ENCODE measurements at regions of chr2 and their contacts with region 1.

Region 1: GRCh38 chr2:189179570-189179950 is at the start of gene COL5A2:
- DNase-seq: peak in 1 of 2 donors; percentile 79
- H3K4me3 ChIP-seq: peak within 1 kb of the TSS; percentile 54 to 87
- H3K27ac ChIP-seq: peak within 1 kb of the TSS; percentile 74 to 84
- H3K4me1 ChIP-seq: peaks cover 0 to 3% of the 10 kb centered on the region in 2 donors
- H3K27me3 ChIP-seq: no peaks in the 10 kb centered on the region
- CTCF ChIP-seq: no peak
- total RNA-seq, gene COL5A2: 64.2 TPM

Region 2: GRCh38 chr2:189076572-189076971 is 103.0 kb before region 1 on chr2:
- intact Hi-C with region 1: no loop called
- DNase-seq: no peak
- H3K4me3 ChIP-seq: no peak overlapping the region
- H3K27ac ChIP-seq: peak overlapping the region; percentile 53 to 69
- H3K4me1 ChIP-seq: peaks cover 0 to 4% of the 10 kb centered on the region in 2 donors
- H3K27me3 ChIP-seq: no peaks in the 10 kb centered on the region
- CTCF ChIP-seq: no peak

Region 3: GRCh38 chr2:189115126-189115525 is 64.4 kb before region 1 on chr2:
- intact Hi-C with region 1: loop called (anchors 5 kb)
- DNase-seq: no peak
- H3K4me3 ChIP-seq: peak overlapping the region in 1 of 2 donors; percentile 23
- H3K27ac ChIP-seq: no peak overlapping the region
- H3K4me1 ChIP-seq: peaks cover 0 to 26% of the 10 kb centered on the region in 2 donors
- H3K27me3 ChIP-seq: no peaks in the 10 kb centered on the region
- CTCF ChIP-seq: peak in 2 of 3 experiments; percentile 16 to 32

Region 4: DNA sequence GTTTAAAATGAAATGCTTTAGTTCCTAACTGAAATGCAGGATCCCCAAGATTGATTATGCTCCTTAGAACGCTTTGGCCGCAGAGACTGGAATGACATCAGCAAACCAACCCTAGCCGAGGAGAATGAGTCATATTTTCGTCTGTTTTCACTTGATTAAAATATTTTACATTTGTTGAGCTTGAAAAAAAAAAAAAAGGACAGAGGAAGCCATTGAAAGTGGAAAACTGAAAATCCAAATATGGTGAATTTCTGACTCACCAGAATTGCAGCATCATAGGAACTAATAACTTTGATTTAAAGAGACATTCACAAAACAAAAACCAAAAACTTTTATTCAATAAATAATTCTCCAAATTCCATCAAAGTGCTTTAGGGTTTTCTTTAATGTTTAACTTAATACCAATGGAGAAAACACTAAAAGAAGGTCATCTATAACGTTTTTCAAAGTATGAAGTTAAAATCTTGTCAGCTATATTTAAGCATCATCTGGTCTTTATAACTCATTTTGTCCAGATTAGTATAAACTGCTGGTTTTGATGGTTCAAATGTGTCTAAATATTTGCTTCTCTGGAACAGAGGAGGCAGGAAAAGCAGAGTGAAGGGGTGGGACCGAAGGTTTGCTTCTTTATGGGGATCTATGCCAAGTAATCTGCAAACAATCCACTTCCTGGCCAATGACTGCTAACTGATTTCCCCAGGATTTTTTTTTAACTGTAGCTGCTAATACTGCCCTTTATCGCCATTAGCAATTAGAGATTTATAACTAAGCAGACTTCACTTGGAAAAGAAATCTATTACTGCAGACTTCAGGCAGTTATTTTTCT is 30.9 kb after region 1 on chr2:
- intact Hi-C with region 1: loop called (anchors 2 kb)
- DNase-seq: peak in 1 of 2 donors; percentile 86
- H3K4me3 ChIP-seq: peak overlapping the region; percentile 35 to 50
- H3K27ac ChIP-seq: peak overlapping the region; percentile 81 to 89
- H3K4me1 ChIP-seq: peaks cover 0 to 21% of the 10 kb centered on the region in 2 donors
- H3K27me3 ChIP-seq: no peaks in the 10 kb centered on the region
- CTCF ChIP-seq: no peak